Left cardiac atrium (tissue), 4 donors: ENCODE measurements at regions of chr9 and their contacts with region 1.

Region 1: GRCh38 chr9:100322954-100323536 is 29.7 kb downstream of the TEX10 start:
- DNase-seq: no peak
- ATAC-seq: no peak

Region 2: DNA sequence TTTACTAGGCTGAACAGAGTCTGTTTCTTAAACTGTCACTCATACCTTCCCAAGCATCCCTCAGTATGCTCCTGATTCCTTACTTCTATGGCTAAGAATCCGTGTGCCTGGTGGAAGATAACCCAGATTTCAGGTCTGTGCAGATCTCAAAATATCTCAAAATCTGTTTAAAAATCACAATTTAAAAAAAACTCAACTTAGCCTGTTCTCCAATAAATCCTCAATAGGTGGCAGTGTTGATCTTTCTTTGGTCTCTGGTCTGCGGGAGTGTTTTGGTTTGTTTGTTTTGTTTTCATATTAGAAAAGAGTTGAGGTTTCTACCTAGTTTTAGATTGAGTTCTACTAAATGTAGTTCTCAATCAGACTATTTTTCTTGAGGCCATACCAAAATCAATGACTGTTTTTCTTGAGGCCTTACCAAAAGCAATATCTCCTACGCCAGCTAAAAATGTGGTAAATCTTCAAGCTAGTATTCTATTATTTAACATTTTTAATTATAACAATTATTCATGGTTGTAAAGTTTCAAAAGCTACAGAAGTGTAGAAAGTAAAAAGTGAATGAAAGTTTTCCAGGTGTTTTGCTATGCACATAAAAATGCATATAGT is 1160.2 kb before region 1 on chr9:
- intact Hi-C with region 1: loop called in 1 of 2 experiments (anchors 10 kb)
- DNase-seq: no peak
- ATAC-seq: no peak